SK-N-SH (cell line): ENCODE measurements at regions of chr11 and their contacts with region 1.

Region 1: GRCh38 chr11:114262681-114263512 is 33.3 kb upstream of the NNMT start:
- DNase-seq: peak; percentile 75
- H3K4me3 ChIP-seq: peak overlapping the region in 1 of 2 experiments; percentile 27; a peak in 1 of 4 replicates
- H3K27ac ChIP-seq: no peak overlapping the region
- H3K4me1 ChIP-seq: no peaks in the 10 kb centered on the region; a peak in 1 of 4 replicates
- H3K27me3 ChIP-seq: peaks cover 14% of the 10 kb centered on the region; the same call in 1 of the 2 replicates
- CTCF ChIP-seq: peak; percentile 73
- EP300 ChIP-seq: no peak
- RAD21 ChIP-seq: peak; percentile 95

Region 2: GRCh38 chr11:113896156-113896879 is 366.6 kb before region 1 on chr11:
- CTCF ChIA-PET with region 1: interaction called, 376 read pairs
- POLR2A ChIA-PET with region 1: interaction called, 4 read pairs
- DNase-seq: peak; percentile 61
- H3K4me3 ChIP-seq: peak overlapping the region in 1 of 2 experiments; percentile 19; a peak in 1 of 4 replicates
- H3K27ac ChIP-seq: no peak overlapping the region
- H3K4me1 ChIP-seq: no peaks in the 10 kb centered on the region
- H3K27me3 ChIP-seq: no peaks in the 10 kb centered on the region; the same call in 1 of the 2 replicates
- CTCF ChIP-seq: peak; percentile 76
- EP300 ChIP-seq: no peak
- RAD21 ChIP-seq: peak; percentile 80

Region 3: DNA sequence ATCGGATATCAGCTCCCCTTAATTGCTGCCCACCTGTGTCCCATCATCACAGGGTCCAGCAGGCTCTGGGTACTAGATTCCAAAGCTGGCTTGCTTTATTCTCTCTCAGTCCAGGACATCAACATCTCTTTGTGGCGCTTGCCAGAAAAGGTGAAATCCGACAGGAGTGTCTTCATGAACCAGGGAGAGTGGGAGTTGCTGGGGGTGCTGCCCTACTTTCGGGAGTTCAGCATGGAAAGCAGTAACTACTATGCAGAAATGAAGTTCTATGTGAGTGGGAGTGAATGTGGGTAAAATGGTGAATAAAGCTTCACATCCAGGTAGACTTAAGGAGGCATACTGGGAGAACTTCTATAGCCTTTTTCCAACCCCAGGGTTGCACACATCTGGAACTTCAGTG is 277.0 kb before region 1 on chr11:
- CTCF ChIA-PET with region 1: interaction called, 329 read pairs
- POLR2A ChIA-PET with region 1: no interaction called
- DNase-seq: no peak
- H3K4me3 ChIP-seq: no peak overlapping the region
- H3K27ac ChIP-seq: no peak overlapping the region
- H3K4me1 ChIP-seq: no peaks in the 10 kb centered on the region
- H3K27me3 ChIP-seq: no peaks in the 10 kb centered on the region; the same call in 1 of the 2 replicates
- CTCF ChIP-seq: no peak
- EP300 ChIP-seq: no peak
- RAD21 ChIP-seq: no peak

Region 4: GRCh38 chr11:114044042-114044871 is 218.6 kb before region 1 on chr11:
- CTCF ChIA-PET with region 1: interaction called, 445 read pairs
- POLR2A ChIA-PET with region 1: no interaction called
- DNase-seq: no peak
- H3K4me3 ChIP-seq: no peak overlapping the region
- H3K27ac ChIP-seq: no peak overlapping the region
- H3K4me1 ChIP-seq: no peaks in the 10 kb centered on the region
- H3K27me3 ChIP-seq: no peaks in the 10 kb centered on the region; the same call in 1 of the 2 replicates
- CTCF ChIP-seq: no peak
- EP300 ChIP-seq: no peak
- RAD21 ChIP-seq: no peak

Region 5: GRCh38 chr11:114159802-114160632 is 102.9 kb before region 1 on chr11:
- CTCF ChIA-PET with region 1: interaction called, 47 read pairs
- POLR2A ChIA-PET with region 1: no interaction called
- DNase-seq: peak; percentile 87
- H3K4me3 ChIP-seq: no peak overlapping the region; a peak in 2 of 4 replicates
- H3K27ac ChIP-seq: no peak overlapping the region
- H3K4me1 ChIP-seq: peaks cover 31 to 37% of the 10 kb centered on the region in 2 experiments
- H3K27me3 ChIP-seq: peaks cover 59% of the 10 kb centered on the region
- CTCF ChIP-seq: no peak
- EP300 ChIP-seq: peak; percentile 80 to 82
- RAD21 ChIP-seq: peak; percentile 33

Region 6: GRCh38 chr11:114228435-114229411 is 34.2 kb before region 1 on chr11:
- CTCF ChIA-PET with region 1: interaction called, 25 read pairs
- POLR2A ChIA-PET with region 1: no interaction called
- DNase-seq: peak; percentile 73
- H3K4me3 ChIP-seq: no peak overlapping the region
- H3K27ac ChIP-seq: no peak overlapping the region
- H3K4me1 ChIP-seq: peaks cover 0 to 6% of the 10 kb centered on the region in 2 experiments; a peak in 1 of 4 replicates
- H3K27me3 ChIP-seq: peaks cover 47% of the 10 kb centered on the region; the same call in 1 of the 2 replicates
- CTCF ChIP-seq: no peak
- EP300 ChIP-seq: 0 out of 4 replicates have a peak, but pooled peaks of 1 of the 2 experiments have one; percentile 8
- RAD21 ChIP-seq: no peak

Region 7: GRCh38 chr11:114290503-114291235 is 27.8 kb after region 1 on chr11:
- CTCF ChIA-PET with region 1: interaction called, 15 read pairs
- POLR2A ChIA-PET with region 1: no interaction called
- DNase-seq: no peak
- H3K4me3 ChIP-seq: peak overlapping the region in 1 of 2 experiments; percentile 6; a peak in 1 of 4 replicates
- H3K27ac ChIP-seq: peak overlapping the region; percentile 82 to 100
- H3K4me1 ChIP-seq: peaks cover 2 to 15% of the 10 kb centered on the region in 2 experiments; a peak in 3 of 4 replicates
- H3K27me3 ChIP-seq: no peaks in the 10 kb centered on the region
- CTCF ChIP-seq: no peak
- EP300 ChIP-seq: no peak
- RAD21 ChIP-seq: no peak

Region 8: DNA sequence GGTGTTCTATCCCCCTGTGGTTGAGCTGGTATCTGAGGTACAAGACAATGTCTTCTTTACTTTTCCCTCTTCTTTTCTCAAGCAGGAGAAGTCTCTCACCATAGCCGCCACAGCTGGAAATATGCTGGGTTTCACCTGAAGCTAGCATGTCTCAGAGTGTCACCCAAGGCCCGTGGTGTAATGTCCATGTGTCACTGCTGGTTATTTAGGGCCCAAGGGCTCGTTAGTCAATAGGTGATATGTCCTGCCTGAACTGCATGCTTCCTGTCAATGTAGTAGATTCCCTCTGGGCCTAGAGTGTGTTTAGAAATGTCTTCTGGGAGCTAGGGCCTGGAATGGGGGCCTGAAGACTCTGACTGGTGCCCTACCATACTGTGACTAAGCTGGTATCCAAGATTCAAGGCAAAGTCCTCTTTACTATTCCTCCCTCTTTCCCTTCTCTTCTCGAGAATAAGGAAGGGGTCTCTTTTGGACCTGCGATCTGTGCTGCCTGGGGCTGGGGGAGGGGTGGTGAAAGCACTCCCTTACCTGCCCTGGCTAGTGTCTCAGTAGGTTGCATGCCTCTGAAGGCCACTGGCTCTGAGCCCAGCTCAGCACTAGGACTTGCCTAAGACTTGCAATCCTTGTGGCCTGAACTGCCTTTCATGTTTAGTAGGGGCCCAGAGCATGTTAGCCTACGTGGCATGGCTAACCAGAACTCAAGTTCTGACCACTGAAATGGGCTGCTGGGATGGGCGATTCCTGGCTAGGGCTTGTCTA is 163.2 kb after region 1 on chr11:
- CTCF ChIA-PET with region 1: no interaction called
- POLR2A ChIA-PET with region 1: no interaction called
- DNase-seq: no peak
- H3K4me3 ChIP-seq: no peak overlapping the region
- H3K27ac ChIP-seq: no peak overlapping the region
- H3K4me1 ChIP-seq: no peaks in the 10 kb centered on the region
- H3K27me3 ChIP-seq: no peaks in the 10 kb centered on the region
- CTCF ChIP-seq: no peak
- EP300 ChIP-seq: no peak
- RAD21 ChIP-seq: no peak